ENCODE measurements at regions of chr11 and their contacts with region 1.

Region 1: DNA sequence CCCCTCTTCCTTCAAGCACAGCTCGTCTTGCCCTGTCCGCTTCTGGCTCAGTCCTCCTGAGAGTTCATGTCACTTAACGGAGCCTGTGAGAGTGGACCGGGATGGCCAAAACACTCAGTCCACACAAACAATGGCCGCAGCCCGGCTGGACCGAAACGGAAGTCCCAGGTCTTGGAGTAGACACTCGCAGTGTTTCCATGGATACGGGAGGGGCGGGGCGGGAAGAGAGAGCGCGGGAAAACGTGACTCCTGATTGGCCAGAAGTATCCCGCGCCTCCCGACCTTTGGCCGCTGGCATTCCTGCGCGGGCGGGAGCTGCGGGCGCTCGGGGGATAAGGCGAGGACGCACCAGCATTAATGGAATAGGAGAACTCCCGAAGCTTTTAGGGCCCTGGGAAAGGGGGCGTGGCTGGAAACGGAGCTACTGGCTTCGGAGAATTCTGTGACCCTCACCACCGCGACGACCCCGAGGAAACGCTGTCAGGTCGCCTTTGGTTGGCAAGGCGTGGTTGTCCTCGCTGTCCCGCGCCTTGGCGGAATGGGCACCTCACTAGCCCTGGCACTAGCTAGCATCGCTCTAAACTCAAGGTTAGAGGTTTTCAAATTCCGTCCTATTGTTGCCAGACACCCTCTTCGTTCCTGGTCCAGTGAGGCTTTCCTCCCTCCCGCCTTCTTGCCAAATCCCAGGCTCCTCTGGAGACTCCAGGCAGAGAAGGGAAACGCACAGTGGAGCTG is at the starts of genes NLRP14 and ZNF214:
- DNase-seq: peak; percentile 92
- H3K4me3 ChIP-seq: peak within 1 kb of the TSS; percentile 56 to 88 (median 85)
- H3K27ac ChIP-seq: peak within 1 kb of the TSS; percentile 19
- H3K4me1 ChIP-seq: peaks cover 11% of the 10 kb centered on the region
- H3K27me3 ChIP-seq: no peaks in the 10 kb centered on the region
- CTCF ChIP-seq: no peak
- POLR2A ChIP-seq: peak; percentile 31
- total RNA-seq, gene NLRP14: 0.24 and 0.35 TPM in 2 replicates
- total RNA-seq, gene ZNF214: 1.7 and 2.5 TPM in 2 replicates

Region 2: DNA sequence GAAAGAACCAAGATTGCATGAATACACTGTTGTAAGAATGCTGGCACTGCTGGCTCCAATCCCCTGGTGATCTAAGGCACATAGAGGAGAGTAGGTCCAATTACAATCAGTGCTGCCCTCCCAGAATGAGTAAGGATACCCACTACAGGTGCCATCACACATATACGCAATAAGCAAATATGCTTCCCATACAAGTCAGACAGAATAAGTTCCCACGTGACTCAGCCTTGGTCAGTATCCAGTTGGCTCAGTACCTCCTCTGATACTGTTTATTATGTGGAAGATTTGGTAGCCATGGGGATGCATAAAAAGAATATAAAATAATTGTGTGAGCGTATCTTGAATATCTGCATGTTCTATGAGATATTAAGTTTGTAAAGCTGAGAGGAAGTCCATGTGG is 108.4 kb before region 1 on chr11:
- CTCF ChIA-PET with region 1: no interaction called
- POLR2A ChIA-PET with region 1: no interaction called
- dilution Hi-C with region 1: no loop called
- intact Hi-C with region 1: loop called (anchors 5 kb)
- DNase-seq: peak; percentile 68
- H3K4me3 ChIP-seq: no peak overlapping the region
- H3K27ac ChIP-seq: no peak overlapping the region
- H3K4me1 ChIP-seq: peaks cover 7% of the 10 kb centered on the region
- H3K27me3 ChIP-seq: no peaks in the 10 kb centered on the region
- CTCF ChIP-seq: no peak
- POLR2A ChIP-seq: no peak

Region 3: DNA sequence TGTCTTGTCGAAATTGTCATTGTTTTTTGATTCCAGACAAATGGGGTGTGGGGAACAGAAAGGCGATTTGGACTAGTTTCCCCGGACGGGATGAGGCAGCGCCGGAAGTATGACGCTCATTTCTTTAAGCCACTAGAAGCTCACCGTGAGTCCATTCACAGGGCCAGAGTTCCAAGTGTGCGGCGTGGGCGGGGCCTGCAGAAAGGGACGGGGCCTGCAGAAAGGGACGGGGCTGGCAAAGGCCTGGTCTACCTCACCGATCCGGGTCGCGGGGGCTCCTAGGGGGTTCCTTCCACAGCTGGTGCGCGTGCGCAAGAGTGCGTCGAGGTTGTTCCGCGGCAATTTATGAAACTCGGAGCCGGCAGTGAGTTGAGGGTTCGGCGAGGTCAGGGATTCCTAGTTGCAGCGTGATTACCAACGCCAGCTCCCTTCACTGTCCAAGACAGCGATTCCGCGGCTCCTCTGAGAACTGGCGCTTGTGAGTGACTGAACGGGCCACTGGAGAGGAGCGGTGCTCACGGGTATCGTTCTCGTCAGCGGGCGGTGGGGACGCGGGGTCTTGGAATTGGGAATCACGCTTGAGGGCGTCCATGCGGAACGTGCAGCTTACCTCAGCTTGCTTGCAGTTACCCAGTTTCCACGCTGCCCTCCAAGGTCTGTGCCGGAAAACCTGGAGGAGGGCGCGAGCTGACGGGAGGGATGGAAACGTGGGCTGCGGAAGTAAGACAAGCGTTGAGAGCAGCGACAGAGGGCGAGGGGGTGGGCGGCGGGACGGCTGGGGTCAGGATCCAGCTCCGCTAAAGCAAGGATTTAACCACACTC is 93.9 kb before region 1 on chr11 and contains the start of gene ZNF215:
- CTCF ChIA-PET with region 1: no interaction called
- POLR2A ChIA-PET with region 1: no interaction called
- dilution Hi-C with region 1: no loop called
- intact Hi-C with region 1: loop called (anchors 2 kb)
- DNase-seq: peak; percentile 74
- H3K4me3 ChIP-seq: peak within 1 kb of the TSS; percentile 43 to 94 (median 88)
- H3K27ac ChIP-seq: peak within 1 kb of the TSS; percentile 57
- H3K4me1 ChIP-seq: peaks cover 13% of the 10 kb centered on the region
- H3K27me3 ChIP-seq: no peaks in the 10 kb centered on the region
- CTCF ChIP-seq: no peak
- POLR2A ChIP-seq: no peak
- total RNA-seq, gene ZNF215: 2.9 and 6.0 TPM in 2 replicates

Region 4: GRCh38 chr11:6992457-6993417 is 27.6 kb before region 1 on chr11:
- CTCF ChIA-PET with region 1: no interaction called
- POLR2A ChIA-PET with region 1: no interaction called
- dilution Hi-C with region 1: no loop called
- intact Hi-C with region 1: no loop called
- DNase-seq: peak; percentile 67
- H3K4me3 ChIP-seq: no peak overlapping the region
- H3K27ac ChIP-seq: no peak overlapping the region
- H3K4me1 ChIP-seq: no peaks in the 10 kb centered on the region
- H3K27me3 ChIP-seq: no peaks in the 10 kb centered on the region
- CTCF ChIP-seq: no peak
- POLR2A ChIP-seq: no peak

Region 5: GRCh38 chr11:7004482-7004881 is 15.9 kb before region 1 on chr11:
- CTCF ChIA-PET with region 1: interaction called, 4 read pairs
- POLR2A ChIA-PET with region 1: no interaction called
- dilution Hi-C with region 1: no loop called
- intact Hi-C with region 1: loop called (anchors 1 kb)
- DNase-seq: peak; percentile 57
- H3K4me3 ChIP-seq: no peak overlapping the region
- H3K27ac ChIP-seq: peak overlapping the region; percentile 20
- H3K4me1 ChIP-seq: peaks cover 21% of the 10 kb centered on the region
- H3K27me3 ChIP-seq: no peaks in the 10 kb centered on the region
- CTCF ChIP-seq: no peak
- POLR2A ChIP-seq: no peak

Region 6: DNA sequence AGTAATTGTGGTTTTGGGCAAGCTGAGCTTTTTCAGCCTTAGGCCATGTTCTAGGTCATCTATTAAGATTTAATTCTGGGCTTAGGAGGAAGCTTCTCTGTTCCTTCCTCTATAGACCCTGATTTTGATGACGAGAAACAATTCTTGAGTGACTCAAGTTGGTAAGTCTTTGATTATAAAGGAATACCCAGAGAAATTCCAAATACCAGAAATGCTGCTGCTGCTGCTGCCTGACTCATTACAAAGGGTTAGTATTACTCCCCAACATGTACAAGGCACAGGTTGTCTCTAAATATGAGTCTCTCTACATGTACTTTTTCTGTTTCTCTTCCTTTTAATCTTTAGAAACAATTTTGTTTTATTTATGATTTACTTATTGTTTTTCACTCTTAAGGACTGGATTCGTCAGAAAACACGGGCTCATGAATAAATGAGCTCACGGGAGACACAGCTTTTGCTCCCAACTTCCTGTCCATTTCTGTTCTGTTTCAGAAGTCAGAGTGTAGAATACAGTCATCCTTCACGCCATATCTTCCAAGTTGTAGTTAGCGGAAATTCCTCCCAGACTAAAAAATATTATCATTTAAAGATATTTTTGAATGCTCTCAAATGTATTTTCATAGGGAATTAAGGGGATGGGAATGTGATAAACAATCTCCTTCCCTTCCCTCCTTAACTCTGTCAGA is 36.6 kb after region 1 on chr11:
- CTCF ChIA-PET with region 1: interaction called, 4 read pairs
- POLR2A ChIA-PET with region 1: no interaction called
- dilution Hi-C with region 1: no loop called
- intact Hi-C with region 1: loop called (anchors 1 kb)
- DNase-seq: peak; percentile 64
- H3K4me3 ChIP-seq: no peak overlapping the region
- H3K27ac ChIP-seq: peak overlapping the region; percentile 81
- H3K4me1 ChIP-seq: peaks cover 31% of the 10 kb centered on the region
- H3K27me3 ChIP-seq: no peaks in the 10 kb centered on the region
- CTCF ChIP-seq: no peak
- POLR2A ChIP-seq: no peak

Region 7: GRCh38 chr11:7088921-7089320 is 68.6 kb after region 1 on chr11 and contains the start of gene RBMXL2:
- CTCF ChIA-PET with region 1: no interaction called
- POLR2A ChIA-PET with region 1: no interaction called
- dilution Hi-C with region 1: no loop called
- intact Hi-C with region 1: no loop called
- DNase-seq: no peak
- H3K4me3 ChIP-seq: no peak within 1 kb of the TSS
- H3K27ac ChIP-seq: no peak within 1 kb of the TSS
- H3K4me1 ChIP-seq: no peaks in the 10 kb centered on the region
- H3K27me3 ChIP-seq: peaks cover 0 to 3% of the 10 kb centered on the region in 2 experiments
- CTCF ChIP-seq: peak in 1 of 2 donors; percentile 12
- POLR2A ChIP-seq: no peak
- total RNA-seq, gene RBMXL2: 0.51 TPM in 1 of 2 replicates, not detected in the other